PC-9 (cell line): ENCODE measurements at regions of chr10 and their contacts with region 1.

Region 1: GRCh38 chr10:23994479-23995046 is 214.4 kb upstream of the KIAA1217 start:
- DNase-seq: peak in 1 of 2 experiments; percentile 52
- H3K4me3 ChIP-seq: no peak overlapping the region
- H3K27ac ChIP-seq: no peak overlapping the region
- H3K4me1 ChIP-seq: no peaks in the 10 kb centered on the region
- H3K27me3 ChIP-seq: no peaks in the 10 kb centered on the region
- CTCF ChIP-seq: peak; percentile 81

Region 2: GRCh38 chr10:23139677-23140076 is 854.9 kb before region 1 on chr10:
- CTCF ChIA-PET with region 1: no interaction called
- POLR2A ChIA-PET with region 1: no interaction called
- intact Hi-C with region 1: no loop called
- DNase-seq: no peak
- H3K4me3 ChIP-seq: no peak overlapping the region
- H3K27ac ChIP-seq: no peak overlapping the region
- H3K4me1 ChIP-seq: no peaks in the 10 kb centered on the region
- H3K27me3 ChIP-seq: no peaks in the 10 kb centered on the region
- CTCF ChIP-seq: no peak

Region 3: GRCh38 chr10:24201503-24202180 is 207.1 kb after region 1 on chr10:
- CTCF ChIA-PET with region 1: no interaction called
- POLR2A ChIA-PET with region 1: no interaction called
- intact Hi-C with region 1: loop called (anchors 2 kb)
- DNase-seq: no peak
- H3K4me3 ChIP-seq: no peak overlapping the region
- H3K27ac ChIP-seq: no peak overlapping the region
- H3K4me1 ChIP-seq: peaks cover 8% of the 10 kb centered on the region
- H3K27me3 ChIP-seq: no peaks in the 10 kb centered on the region
- CTCF ChIP-seq: no peak

Region 4: DNA sequence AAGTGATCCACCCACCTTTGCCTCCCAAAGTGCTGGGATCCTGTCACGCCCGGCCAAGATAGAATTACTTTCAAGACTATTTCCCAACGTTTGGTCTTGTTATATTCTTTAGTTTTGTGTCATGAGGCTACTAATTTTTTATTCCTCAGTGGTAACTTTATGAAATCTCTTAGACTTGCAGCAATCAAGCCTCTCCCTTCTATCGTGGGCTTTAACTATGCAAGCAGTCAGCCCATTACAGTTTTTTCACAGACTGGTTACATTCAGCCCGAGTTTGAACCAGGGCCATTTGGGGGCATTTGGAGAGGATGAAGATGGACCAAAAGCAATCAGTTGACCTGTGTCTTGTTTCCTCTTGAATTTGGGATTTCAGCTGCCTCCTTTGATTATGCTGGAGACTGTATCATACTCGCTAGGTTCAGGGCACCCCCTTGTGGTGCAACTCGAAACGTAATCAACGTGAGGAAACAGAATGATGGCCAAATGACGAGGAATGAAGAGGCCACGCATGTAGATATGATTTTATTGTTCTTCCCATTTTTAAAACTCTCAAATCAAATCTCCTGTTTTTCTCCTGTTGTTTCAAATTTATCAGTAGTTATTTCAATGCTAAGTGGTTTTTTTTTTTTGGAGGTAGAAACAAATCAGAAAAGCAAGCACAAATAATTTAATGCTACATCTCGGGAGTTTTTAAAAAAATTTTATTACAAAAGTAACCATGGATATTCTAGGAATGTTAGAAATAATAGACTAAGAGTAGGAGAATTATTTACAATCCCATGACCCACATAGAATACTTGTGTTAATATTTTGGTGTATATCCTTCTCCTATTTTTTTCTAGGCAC is 365.9 kb after region 1 on chr10:
- CTCF ChIA-PET with region 1: interaction called, 12 read pairs
- POLR2A ChIA-PET with region 1: interaction called, 11 read pairs
- intact Hi-C with region 1: loop called (anchors 1 kb)
- DNase-seq: peak; percentile 40 to 61
- H3K4me3 ChIP-seq: no peak overlapping the region
- H3K27ac ChIP-seq: no peak overlapping the region
- H3K4me1 ChIP-seq: no peaks in the 10 kb centered on the region
- H3K27me3 ChIP-seq: no peaks in the 10 kb centered on the region
- CTCF ChIP-seq: peak; percentile 77

Region 5: GRCh38 chr10:24383681-24384106 is 389.1 kb after region 1 on chr10:
- CTCF ChIA-PET with region 1: interaction called, 4 read pairs
- POLR2A ChIA-PET with region 1: no interaction called
- intact Hi-C with region 1: loop called (anchors 1 kb)
- DNase-seq: peak; percentile 83 to 91
- H3K4me3 ChIP-seq: no peak overlapping the region; the same call in 1 of the 2 replicates
- H3K27ac ChIP-seq: peak overlapping the region; percentile 65; the same call in 1 of the 2 replicates
- H3K4me1 ChIP-seq: peaks cover 8% of the 10 kb centered on the region; the same call in 1 of the 2 replicates
- H3K27me3 ChIP-seq: no peaks in the 10 kb centered on the region
- CTCF ChIP-seq: peak; percentile 63

Region 6: GRCh38 chr10:24503461-24504320 is 509.1 kb after region 1 on chr10:
- CTCF ChIA-PET with region 1: no interaction called
- POLR2A ChIA-PET with region 1: no interaction called
- intact Hi-C with region 1: loop called (anchors 1 kb)
- DNase-seq: peak in 1 of 2 experiments; percentile 40
- H3K4me3 ChIP-seq: no peak overlapping the region
- H3K27ac ChIP-seq: no peak overlapping the region
- H3K4me1 ChIP-seq: no peaks in the 10 kb centered on the region
- H3K27me3 ChIP-seq: no peaks in the 10 kb centered on the region
- CTCF ChIP-seq: peak; percentile 74

Region 7: DNA sequence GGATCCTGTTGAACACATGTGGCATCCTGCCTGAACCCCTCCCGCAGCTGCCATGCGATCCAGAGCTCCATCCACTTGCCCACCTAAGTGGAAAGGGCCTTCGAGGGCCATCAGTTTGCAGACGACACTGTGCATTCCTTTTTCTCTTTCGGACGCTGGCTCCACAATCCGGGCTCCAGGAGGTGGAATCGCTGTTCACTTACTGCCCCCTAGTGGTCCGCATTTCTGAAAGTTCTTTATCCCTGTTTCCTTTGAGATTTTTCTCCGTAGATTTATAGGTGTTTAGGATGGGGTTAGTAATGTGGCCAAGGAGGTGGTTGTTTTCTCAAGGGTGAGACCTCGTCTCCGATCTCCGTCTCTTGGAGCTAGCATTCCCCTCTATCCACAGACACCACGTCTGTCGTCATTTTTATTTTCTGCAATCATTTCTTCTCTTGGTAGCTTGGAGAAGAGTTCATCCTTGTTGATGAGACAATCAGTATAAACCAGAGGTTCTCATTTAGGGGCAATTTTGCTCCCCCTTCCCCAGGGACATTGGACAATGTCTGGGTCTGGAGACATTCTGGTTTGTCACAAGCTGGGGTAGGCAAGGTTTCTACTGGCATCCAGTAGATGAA is 524.5 kb after region 1 on chr10:
- CTCF ChIA-PET with region 1: interaction called, 3 read pairs
- POLR2A ChIA-PET with region 1: no interaction called
- intact Hi-C with region 1: loop called (anchors 1 kb)
- DNase-seq: peak in 1 of 2 experiments; percentile 41
- H3K4me3 ChIP-seq: no peak overlapping the region
- H3K27ac ChIP-seq: no peak overlapping the region
- H3K4me1 ChIP-seq: no peaks in the 10 kb centered on the region
- H3K27me3 ChIP-seq: no peaks in the 10 kb centered on the region
- CTCF ChIP-seq: peak; percentile 82

Region 8: GRCh38 chr10:24556750-24557742 is 562.5 kb after region 1 on chr10:
- CTCF ChIA-PET with region 1: no interaction called
- POLR2A ChIA-PET with region 1: no interaction called
- intact Hi-C with region 1: loop called (anchors 1 kb)
- DNase-seq: peak in 1 of 2 experiments; percentile 47
- H3K4me3 ChIP-seq: no peak overlapping the region
- H3K27ac ChIP-seq: no peak overlapping the region
- H3K4me1 ChIP-seq: no peaks in the 10 kb centered on the region
- H3K27me3 ChIP-seq: no peaks in the 10 kb centered on the region
- CTCF ChIP-seq: peak; percentile 75